GM18951 (cell line): ENCODE measurements at regions of chr1 and their contacts with region 1.

Region 1: GRCh38 chr1:206583707-206584648 is 28.3 kb downstream of the EIF2D start:
- POLR2A ChIP-seq: no peak

Region 2: GRCh38 chr1:206489980-206490770 is 93.8 kb before region 1 on chr1:
- in situ Hi-C with region 1: loop called (anchors 5 kb)
- POLR2A ChIP-seq: no peak

Region 3: GRCh38 chr1:206544562-206545257 is 39.3 kb before region 1 on chr1:
- in situ Hi-C with region 1: loop called (anchors 5 kb)
- POLR2A ChIP-seq: no peak